HEK293T (cell line): ENCODE measurements at regions of chr1 and their contacts with region 1.

Region 1: DNA sequence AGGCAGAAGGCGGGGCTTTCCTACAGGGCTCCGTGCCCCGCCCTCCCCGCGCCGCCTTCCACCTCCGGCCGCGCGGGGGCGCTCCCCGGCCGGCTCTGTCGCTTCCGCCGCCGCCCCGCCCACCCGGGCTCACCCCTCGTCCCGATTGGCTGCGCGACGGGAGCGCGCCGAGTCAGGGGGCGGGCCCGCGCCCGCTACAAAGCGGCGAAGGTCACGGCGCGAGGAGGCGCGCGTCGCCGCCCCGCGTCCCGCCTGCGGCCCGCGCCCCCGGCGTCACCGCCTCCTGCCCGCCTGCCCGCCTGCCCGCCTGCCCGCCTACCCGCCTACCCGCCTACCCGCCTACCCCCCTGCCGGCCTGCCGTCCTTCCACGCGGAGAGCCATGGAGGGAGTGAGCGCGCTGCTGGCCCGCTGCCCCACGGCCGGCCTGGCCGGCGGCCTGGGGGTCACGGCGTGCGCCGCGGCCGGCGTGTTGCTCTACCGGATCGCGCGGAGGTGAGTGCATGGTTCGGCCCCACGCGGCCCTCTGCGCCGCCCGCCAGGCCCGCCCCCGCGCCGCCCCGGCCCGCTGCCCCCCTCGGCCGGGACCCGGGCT is at the start of gene TMEM201:
- DNase-seq: peak; percentile 96

Region 2: DNA sequence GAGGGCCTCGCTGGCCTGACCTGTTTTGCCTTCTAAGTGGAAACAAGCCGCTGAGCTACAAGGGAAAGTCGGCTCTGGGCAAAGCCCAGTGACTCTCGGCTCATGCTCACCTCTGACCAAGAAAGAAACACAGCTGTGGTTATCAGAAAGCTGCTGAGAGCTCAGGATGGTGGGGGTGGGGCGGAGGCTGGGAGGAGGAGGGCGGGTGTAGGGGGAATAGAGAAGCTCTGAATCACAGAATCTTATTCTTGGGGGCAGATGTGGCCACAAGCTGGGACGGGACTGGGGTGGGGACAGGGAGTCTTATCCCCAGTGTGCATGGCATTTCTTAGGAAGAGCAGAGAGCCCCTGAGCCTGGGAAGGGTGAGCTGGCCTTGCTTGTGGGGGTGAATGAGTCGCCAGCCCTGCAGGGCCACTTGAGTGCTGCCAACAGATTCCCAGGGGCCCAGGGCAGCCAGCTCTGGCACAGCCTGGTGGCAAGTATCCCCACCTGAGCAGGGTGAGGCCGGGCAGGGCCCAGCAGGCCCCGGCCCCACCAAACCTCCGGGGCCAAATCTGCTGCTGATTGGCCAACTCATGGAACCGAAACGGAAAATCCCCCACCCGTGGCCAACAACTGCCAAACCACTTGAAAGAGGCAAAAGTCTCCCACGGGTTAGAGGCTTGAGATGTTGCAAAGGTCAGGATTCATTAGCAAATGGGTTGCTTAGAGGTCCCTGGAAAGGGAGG is 175.3 kb before region 1 on chr1:
- CTCF ChIA-PET with region 1: no interaction called
- POLR2A ChIA-PET with region 1: no interaction called
- DNase-seq: no peak

Region 3: GRCh38 chr1:9518454-9518998 is 70.1 kb before region 1 on chr1:
- CTCF ChIA-PET with region 1: interaction called, 14 read pairs
- POLR2A ChIA-PET with region 1: no interaction called
- DNase-seq: no peak

Region 4: GRCh38 chr1:9721606-9722377 is 133.1 kb after region 1 on chr1:
- CTCF ChIA-PET with region 1: no interaction called
- POLR2A ChIA-PET with region 1: no interaction called
- DNase-seq: peak; percentile 83

Region 5: DNA sequence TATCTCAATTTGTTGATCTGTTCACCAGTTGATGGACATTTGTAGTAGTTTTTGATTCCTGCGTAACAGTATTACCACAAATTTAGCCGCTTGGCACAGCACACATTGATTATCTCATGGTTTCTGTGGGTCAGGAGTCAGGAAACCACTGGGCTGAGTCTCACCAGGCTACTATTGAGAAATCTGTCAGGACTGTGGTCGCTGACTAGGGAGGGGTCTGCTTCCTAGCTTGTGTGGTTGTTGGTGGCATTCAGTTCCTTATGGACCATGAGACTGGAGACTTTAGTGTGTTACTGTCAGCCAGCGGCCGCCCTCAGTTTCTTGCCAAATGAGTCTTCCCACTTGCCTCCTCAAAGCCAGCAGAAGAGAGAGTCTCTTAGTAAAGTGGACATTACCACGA is 895.9 kb after region 1 on chr1:
- CTCF ChIA-PET with region 1: no interaction called
- POLR2A ChIA-PET with region 1: no interaction called
- DNase-seq: no peak